ENCODE measurements at regions of chr7 and their contacts with region 1.

Region 1: GRCh38 chr7:117458977-117459583 is 20.7 kb upstream of the CFTR start:
- DNase-seq: no peak
- H3K4me3 ChIP-seq: no peak overlapping the region
- H3K27ac ChIP-seq: no peak overlapping the region
- H3K27me3 ChIP-seq: no peaks in the 10 kb centered on the region
- CTCF ChIP-seq: peak; percentile 67

Region 2: DNA sequence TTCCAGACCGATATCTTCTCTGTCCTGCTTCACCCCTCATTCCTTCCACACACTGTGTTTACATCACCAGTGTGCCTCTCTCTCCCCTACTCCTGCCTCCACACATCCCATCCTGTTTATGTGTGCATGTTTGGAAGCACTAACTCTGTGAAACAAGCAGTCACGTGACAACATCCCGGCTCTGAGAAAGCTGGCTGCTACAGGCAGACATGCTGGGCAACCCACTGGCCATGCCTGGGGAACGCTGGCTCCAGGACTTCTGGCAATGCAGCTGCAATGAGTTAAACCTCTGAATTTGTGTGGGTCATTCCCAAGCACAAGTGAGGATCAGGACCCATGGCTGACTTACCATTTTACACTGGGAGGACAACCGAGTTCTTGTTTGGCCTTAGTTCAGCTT is 210.3 kb before region 1 on chr7:
- CTCF ChIA-PET with region 1: no interaction called
- POLR2A ChIA-PET with region 1: no interaction called
- DNase-seq: no peak
- H3K4me3 ChIP-seq: no peak overlapping the region
- H3K27ac ChIP-seq: no peak overlapping the region
- H3K27me3 ChIP-seq: no peaks in the 10 kb centered on the region
- CTCF ChIP-seq: no peak

Region 3: GRCh38 chr7:117479225-117480054 is 20.4 kb after region 1 on chr7 and contains the start of gene CFTR:
- CTCF ChIA-PET with region 1: interaction called, 17 read pairs
- POLR2A ChIA-PET with region 1: no interaction called
- DNase-seq: no peak
- H3K4me3 ChIP-seq: peak within 1 kb of the TSS; percentile 50
- H3K27ac ChIP-seq: no peak within 1 kb of the TSS
- H3K27me3 ChIP-seq: peaks cover 24% of the 10 kb centered on the region
- CTCF ChIP-seq: no peak
- polyA plus RNA-seq, gene CFTR: 0.16 and 0.37 TPM in 2 replicates

Region 4: DNA sequence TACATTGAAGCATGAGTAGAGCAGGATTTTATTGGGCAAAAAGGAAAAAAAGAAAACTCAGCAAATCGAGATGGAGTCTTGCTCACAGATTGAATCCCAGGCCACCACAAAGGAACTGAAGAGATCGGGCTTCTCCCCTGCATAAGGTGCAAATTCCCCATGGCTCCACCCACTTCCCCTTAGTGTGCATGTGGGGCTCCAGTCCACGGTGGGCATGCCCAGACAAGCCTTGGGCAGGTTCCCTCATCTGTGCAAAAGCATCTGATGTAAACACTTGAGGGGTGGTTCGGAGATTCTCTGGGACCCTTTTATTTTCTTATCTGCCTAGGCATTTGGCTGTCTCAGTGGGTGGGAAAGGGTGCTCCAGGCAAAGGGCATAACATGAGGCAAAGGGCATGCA is 171.4 kb after region 1 on chr7:
- CTCF ChIA-PET with region 1: no interaction called
- POLR2A ChIA-PET with region 1: no interaction called
- DNase-seq: no peak
- H3K4me3 ChIP-seq: no peak overlapping the region
- H3K27ac ChIP-seq: no peak overlapping the region
- H3K27me3 ChIP-seq: no peaks in the 10 kb centered on the region
- CTCF ChIP-seq: no peak

Region 5: GRCh38 chr7:117659453-117660086 is 200.5 kb after region 1 on chr7:
- CTCF ChIA-PET with region 1: interaction called, 13 read pairs
- POLR2A ChIA-PET with region 1: no interaction called
- DNase-seq: no peak
- H3K4me3 ChIP-seq: no peak overlapping the region
- H3K27ac ChIP-seq: no peak overlapping the region
- H3K27me3 ChIP-seq: no peaks in the 10 kb centered on the region
- CTCF ChIP-seq: no peak

Region 6: DNA sequence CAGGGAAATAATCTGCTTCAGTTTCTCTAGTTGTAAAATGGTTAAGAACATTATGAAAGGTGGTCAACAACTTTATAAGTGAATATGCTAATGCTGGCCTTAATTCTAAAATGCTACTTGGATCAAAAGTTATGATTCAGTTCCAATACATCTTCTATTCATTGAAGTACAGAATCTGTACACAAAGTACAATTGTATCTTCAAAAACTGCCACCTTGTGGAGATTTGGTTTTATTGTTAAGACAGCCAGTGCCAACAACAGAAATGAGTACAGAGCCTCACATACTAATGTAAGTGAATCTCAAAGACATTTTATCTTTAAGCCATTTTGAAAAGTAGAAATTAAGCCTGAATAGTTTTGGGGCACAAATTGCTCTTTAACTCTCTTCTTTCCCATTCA is 214.8 kb after region 1 on chr7:
- CTCF ChIA-PET with region 1: interaction called, 31 read pairs
- POLR2A ChIA-PET with region 1: no interaction called
- DNase-seq: no peak
- H3K4me3 ChIP-seq: no peak overlapping the region
- H3K27ac ChIP-seq: no peak overlapping the region
- H3K27me3 ChIP-seq: no peaks in the 10 kb centered on the region
- CTCF ChIP-seq: peak; percentile 49

Region 7: GRCh38 chr7:117686311-117686935 is 227.3 kb after region 1 on chr7:
- CTCF ChIA-PET with region 1: interaction called, 10 read pairs
- POLR2A ChIA-PET with region 1: no interaction called
- DNase-seq: no peak
- H3K4me3 ChIP-seq: no peak overlapping the region
- H3K27ac ChIP-seq: no peak overlapping the region
- H3K27me3 ChIP-seq: no peaks in the 10 kb centered on the region
- CTCF ChIP-seq: no peak

Region 8: GRCh38 chr7:117715784-117716445 is 256.8 kb after region 1 on chr7:
- CTCF ChIA-PET with region 1: interaction called, 192 read pairs
- POLR2A ChIA-PET with region 1: no interaction called
- DNase-seq: peak; percentile 32
- H3K4me3 ChIP-seq: no peak overlapping the region
- H3K27ac ChIP-seq: no peak overlapping the region
- H3K27me3 ChIP-seq: no peaks in the 10 kb centered on the region
- CTCF ChIP-seq: peak; percentile 78

Region 9: DNA sequence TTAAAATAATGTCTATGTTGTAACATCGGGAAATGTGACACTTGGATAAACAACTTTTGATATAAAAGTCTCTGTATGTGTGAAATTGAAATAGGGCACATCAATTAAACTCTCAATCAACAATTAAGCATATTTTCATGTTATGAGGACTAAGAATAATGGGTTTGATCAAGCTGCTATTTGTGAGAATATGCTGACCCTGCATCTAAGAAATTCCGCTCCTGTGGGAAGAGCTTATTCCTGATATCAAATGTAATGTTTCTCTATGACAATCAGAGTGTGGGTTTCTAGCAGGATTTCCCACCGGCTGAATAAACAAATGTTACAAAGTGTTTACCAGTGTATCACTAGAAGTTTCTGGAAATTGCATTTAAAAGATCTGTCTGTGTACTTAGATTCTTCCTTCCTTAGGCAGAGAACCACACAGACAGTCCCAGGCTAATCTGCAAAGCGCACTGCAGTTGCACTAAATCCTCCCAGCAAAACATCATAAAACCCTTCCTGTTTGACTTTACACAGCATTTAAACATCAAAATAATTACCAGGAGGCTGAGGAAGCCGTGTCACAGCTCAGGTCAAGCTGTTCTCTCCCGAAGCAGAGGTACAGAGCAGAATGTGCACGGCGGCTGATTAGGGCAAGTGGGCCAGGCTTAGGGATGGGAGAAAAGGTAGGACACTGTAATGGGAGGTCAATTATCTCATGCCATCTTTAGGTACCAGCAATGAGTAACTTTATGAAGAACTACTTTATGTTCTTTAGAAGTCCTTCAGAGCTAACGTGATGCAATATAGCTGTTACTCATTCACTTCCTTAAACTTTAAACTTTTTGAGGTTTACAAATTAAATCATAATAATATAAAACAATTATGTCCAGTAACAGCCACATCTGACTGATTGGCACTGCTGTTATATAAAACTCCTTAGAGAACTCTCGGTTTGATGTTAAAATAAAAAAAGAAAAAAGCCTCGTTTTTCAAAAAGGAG is 523.3 kb after region 1 on chr7:
- CTCF ChIA-PET with region 1: no interaction called
- POLR2A ChIA-PET with region 1: no interaction called
- DNase-seq: no peak
- H3K4me3 ChIP-seq: no peak overlapping the region
- H3K27ac ChIP-seq: no peak overlapping the region
- H3K27me3 ChIP-seq: no peaks in the 10 kb centered on the region
- CTCF ChIP-seq: no peak

Measured in AG04450 (cell line).